ENCODE measurements at regions of chr16 and their contacts with region 1.

Region 1: GRCh38 chr16:70653809-70654771 is 7.7 kb downstream of the IL34 start:
- DNase-seq: peak; percentile 73
- H3K4me3 ChIP-seq: no peak overlapping the region
- H3K27ac ChIP-seq: no peak overlapping the region
- H3K4me1 ChIP-seq: peaks cover 4% of the 10 kb centered on the region
- CTCF ChIP-seq: peak; percentile 99

Region 2: DNA sequence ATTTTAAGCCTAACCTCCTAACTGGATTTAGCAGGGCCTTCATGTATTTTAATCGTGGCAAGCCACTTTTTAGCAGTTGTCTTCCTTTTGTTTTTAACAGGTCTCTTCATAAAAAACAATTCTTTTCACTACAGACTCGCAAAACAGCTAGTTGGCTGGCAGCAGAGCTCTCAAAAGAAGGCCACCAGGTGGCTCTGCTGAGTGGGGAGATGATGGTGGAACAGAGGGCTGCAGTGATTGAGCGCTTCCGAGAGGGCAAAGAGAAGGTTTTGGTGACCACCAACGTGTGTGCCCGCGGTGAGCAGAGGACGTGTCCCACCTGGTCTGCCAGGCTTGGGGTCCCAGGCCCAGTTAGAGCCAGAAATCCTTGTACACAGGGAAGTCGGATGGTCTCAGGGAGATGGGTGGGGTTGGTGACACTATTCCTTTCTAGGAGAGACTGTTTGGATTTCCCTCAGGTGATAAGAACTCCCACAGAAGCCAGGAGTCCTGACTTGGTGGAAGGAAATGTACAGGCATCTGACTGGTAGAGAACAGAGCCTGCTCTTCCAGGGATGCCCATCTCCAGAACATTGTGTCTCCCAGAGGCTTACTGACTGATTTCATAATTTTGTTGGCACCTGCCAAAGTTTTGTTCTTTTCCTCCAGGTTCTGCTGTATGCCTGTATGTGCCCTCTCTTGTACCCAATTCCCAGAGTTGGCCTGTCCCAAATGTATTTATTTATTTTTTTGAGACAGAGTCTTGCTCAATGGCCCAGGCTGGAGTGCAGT is 322.3 kb before region 1 on chr16:
- CTCF ChIA-PET with region 1: no interaction called
- POLR2A ChIA-PET with region 1: no interaction called
- intact Hi-C with region 1: loop called (anchors 1 kb)
- DNase-seq: peak; percentile 34
- H3K4me3 ChIP-seq: no peak overlapping the region
- H3K27ac ChIP-seq: no peak overlapping the region
- H3K4me1 ChIP-seq: no peaks in the 10 kb centered on the region
- CTCF ChIP-seq: peak; percentile 82

Region 3: GRCh38 chr16:70372921-70373728 is 281.0 kb before region 1 on chr16:
- CTCF ChIA-PET with region 1: no interaction called
- POLR2A ChIA-PET with region 1: no interaction called
- intact Hi-C with region 1: loop called (anchors 5 kb)
- DNase-seq: no peak
- H3K4me3 ChIP-seq: no peak overlapping the region
- H3K27ac ChIP-seq: no peak overlapping the region
- H3K4me1 ChIP-seq: no peaks in the 10 kb centered on the region
- CTCF ChIP-seq: no peak

Region 4: DNA sequence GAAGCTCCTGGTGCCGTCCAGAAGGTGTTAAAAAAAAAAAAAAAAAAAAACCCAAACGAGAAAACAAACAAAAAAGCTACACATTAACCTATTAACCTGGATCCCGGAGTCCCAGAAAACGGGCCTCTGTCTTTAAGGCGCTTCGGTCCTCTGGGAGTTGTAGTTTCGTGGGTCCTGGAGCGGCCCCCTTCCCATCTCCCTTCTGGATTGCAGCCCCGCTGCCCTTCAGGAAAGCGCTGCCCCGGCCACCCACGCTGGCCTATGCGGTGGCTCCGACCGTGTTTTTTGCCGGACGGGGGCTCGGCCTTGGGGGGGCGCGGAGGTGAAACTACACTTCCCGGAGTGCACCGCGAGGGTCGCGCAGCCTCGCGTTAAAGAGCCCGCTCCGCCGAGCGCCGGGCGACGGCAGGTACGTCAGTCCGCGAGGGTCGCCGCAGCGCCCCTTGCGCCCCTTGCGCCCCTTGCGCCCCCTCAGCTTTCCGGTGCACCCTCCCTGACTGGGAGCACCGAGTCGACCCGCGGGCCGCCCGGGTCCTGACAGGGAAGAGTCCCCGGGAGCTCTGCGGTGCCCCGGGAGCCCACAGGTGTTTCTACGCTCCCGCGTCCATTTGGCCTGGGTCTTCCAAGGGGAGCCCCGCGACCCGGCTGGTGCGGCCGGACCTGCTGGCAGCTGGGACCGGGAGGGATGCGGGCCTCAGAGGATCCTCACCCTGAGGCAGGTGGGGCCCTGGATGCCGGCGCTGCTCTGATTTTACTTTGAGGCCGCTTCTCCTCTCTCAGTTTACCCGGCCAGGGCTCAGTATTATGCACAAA is 199.7 kb before region 1 on chr16 and contains the start of gene FCSK:
- CTCF ChIA-PET with region 1: no interaction called
- POLR2A ChIA-PET with region 1: no interaction called
- intact Hi-C with region 1: no loop called
- DNase-seq: peak; percentile 90
- H3K4me3 ChIP-seq: peak within 1 kb of the TSS; percentile 77
- H3K27ac ChIP-seq: peak within 1 kb of the TSS; percentile 61
- H3K4me1 ChIP-seq: peaks cover 11% of the 10 kb centered on the region
- CTCF ChIP-seq: peak; percentile 67
- total RNA-seq, gene FCSK: 6.8 and 7.4 TPM in 2 replicates

Region 5: GRCh38 chr16:70508752-70509151 is 145.3 kb before region 1 on chr16:
- CTCF ChIA-PET with region 1: interaction called, 5 read pairs
- POLR2A ChIA-PET with region 1: no interaction called
- intact Hi-C with region 1: loop called (anchors 2 kb)
- DNase-seq: peak; percentile 64
- H3K4me3 ChIP-seq: no peak overlapping the region
- H3K27ac ChIP-seq: peak overlapping the region; percentile 23
- H3K4me1 ChIP-seq: peaks cover 29% of the 10 kb centered on the region
- CTCF ChIP-seq: peak; percentile 81

Region 6: GRCh38 chr16:70561623-70562022 is 92.5 kb before region 1 on chr16:
- CTCF ChIA-PET with region 1: no interaction called
- POLR2A ChIA-PET with region 1: no interaction called
- intact Hi-C with region 1: loop called (anchors 2 kb)
- DNase-seq: no peak
- H3K4me3 ChIP-seq: no peak overlapping the region
- H3K27ac ChIP-seq: no peak overlapping the region
- H3K4me1 ChIP-seq: no peaks in the 10 kb centered on the region
- CTCF ChIP-seq: no peak

Region 7: DNA sequence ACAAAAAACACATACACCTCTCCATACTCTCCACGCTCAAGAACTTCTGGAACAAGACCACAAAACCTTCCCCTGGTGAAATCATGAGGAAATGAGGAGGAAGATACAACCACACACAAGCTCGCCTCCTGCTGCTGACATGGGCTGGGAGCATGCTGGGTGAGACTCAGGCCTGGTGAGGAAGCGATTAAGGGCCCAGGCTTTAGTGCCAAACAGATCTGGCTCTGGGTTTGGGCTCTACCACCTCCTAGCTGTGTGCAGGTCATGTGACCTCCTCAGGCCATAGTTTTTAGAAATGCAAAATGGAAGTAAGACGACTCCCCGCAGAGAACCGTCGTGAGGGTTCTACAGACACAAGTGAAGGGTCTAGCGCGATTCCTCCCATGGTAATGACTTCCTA is 105.6 kb after region 1 on chr16:
- CTCF ChIA-PET with region 1: no interaction called
- POLR2A ChIA-PET with region 1: no interaction called
- intact Hi-C with region 1: no loop called
- DNase-seq: no peak
- H3K4me3 ChIP-seq: no peak overlapping the region
- H3K27ac ChIP-seq: no peak overlapping the region
- H3K4me1 ChIP-seq: no peaks in the 10 kb centered on the region
- CTCF ChIP-seq: no peak

Region 8: DNA sequence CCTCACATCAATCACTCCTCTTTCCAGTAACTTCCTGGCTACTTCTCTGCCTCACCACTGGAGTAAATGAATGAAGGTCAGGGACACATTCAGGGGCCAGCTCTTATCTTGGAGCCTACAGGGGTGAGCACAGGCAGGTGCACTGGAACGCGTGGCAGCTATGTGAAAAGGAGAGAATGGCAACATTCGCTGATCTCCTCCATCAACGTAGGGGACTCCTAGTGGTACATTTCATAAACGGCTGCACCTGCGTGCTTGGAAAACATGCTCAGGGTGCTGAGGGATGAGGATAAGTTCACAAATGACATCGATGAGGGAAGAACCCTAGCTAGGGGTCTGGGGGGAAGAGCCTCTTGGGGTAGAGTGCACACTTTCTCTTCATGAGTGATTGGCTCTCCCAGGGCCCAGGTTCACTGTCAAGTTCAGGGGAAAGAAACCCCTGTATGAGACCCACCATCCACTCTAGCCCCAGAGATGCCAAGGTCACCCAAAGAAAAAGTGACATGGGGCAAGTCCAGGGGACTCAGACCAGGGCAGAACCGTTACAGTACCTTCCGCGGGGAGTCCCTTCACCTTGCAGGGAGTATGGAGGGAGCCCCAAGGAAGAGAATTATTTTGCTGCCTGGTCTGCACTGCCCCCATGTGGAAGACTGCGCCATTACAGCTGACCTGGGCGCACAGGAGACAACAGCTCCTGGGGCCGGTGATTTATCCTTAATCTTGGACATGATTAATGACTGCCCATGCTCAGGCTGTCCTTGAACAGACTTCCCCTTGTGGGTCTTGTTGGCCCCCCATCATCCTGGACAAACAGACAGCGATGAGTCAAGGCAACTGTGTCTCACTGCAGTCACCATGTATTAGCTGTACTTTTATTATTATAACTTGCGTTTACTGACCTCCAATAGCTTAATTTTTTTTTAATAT is 116.8 kb after region 1 on chr16:
- CTCF ChIA-PET with region 1: no interaction called
- POLR2A ChIA-PET with region 1: no interaction called
- intact Hi-C with region 1: loop called (anchors 5 kb)
- DNase-seq: peak; percentile 43
- H3K4me3 ChIP-seq: no peak overlapping the region
- H3K27ac ChIP-seq: no peak overlapping the region
- H3K4me1 ChIP-seq: no peaks in the 10 kb centered on the region
- CTCF ChIP-seq: peak; percentile 86